Activated CD4-positive, alpha-beta T cell treated with anti-CD3 and anti-CD28 coated beads, Interleukin-2, amount 10 ng/mL, durations not matched to agents 24 days and 14 days (primary cell): ENCODE measurements at regions of chr9 and their contacts with region 1.

Region 1: DNA sequence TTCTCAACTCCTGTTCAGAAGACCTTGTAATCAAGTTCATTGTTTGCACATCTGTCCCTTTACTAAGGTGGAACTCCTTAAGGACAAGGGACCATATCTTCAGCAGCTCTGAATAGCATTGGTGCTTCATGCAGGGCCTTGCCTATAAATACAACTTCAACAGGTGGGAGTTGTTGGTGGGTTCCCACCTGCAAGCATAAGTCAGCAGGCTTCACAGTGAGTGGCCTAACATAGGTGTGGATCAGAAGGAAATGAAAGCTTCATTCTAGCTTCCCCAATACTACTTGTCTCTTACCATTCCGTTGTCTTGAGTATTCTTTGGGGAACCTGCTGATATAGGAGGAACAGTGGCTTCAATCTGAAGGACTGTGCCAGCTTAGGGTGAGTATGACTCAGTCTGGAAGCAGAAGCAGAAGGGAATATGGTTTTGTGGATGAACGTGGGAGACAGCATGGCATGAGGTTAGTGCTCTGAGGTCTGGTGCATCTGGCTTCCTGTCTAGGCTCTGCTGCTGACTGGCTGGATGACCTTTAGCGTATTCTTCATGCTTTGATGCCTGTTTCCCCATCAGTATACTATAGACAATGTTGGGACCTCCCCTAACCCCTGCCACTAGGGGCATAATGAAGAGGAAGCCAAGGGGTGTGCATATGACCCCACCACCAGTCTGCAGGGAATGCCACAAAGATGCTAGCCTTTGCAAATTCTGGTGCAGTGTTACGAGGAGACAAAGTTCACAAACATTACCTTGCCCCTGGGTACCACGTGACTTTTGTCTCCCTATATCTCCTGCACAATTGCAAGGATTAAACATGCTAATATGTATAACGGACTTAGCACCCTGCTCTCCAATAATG is 192.3 kb downstream of the PALM2AKAP2 start:
- DNase-seq: peak; percentile 71
- H3K4me3 Mint-ChIP-seq: peak overlapping the region; percentile 18
- H3K27ac Mint-ChIP-seq: peak overlapping the region; percentile 82
- H3K4me1 Mint-ChIP-seq: peaks cover 88% of the 10 kb centered on the region
- H3K27me3 Mint-ChIP-seq: no peaks in the 10 kb centered on the region

Region 2: GRCh38 chr9:109440797-109441287 is 531.4 kb before region 1 on chr9:
- intact Hi-C with region 1: loop called (anchors 10 kb)
- DNase-seq: peak; percentile 92
- H3K4me3 Mint-ChIP-seq: no peak overlapping the region
- H3K27ac Mint-ChIP-seq: peak overlapping the region; percentile 83
- H3K4me1 Mint-ChIP-seq: peaks cover 18% of the 10 kb centered on the region
- H3K27me3 Mint-ChIP-seq: peaks cover 22% of the 10 kb centered on the region

Region 3: GRCh38 chr9:109894921-109895758 is 77.1 kb before region 1 on chr9:
- intact Hi-C with region 1: loop called (anchors 1 kb)
- DNase-seq: peak; percentile 80
- H3K4me3 Mint-ChIP-seq: peak overlapping the region; percentile 56
- H3K27ac Mint-ChIP-seq: peak overlapping the region; percentile 92
- H3K4me1 Mint-ChIP-seq: peaks cover 53% of the 10 kb centered on the region
- H3K27me3 Mint-ChIP-seq: no peaks in the 10 kb centered on the region

Region 4: DNA sequence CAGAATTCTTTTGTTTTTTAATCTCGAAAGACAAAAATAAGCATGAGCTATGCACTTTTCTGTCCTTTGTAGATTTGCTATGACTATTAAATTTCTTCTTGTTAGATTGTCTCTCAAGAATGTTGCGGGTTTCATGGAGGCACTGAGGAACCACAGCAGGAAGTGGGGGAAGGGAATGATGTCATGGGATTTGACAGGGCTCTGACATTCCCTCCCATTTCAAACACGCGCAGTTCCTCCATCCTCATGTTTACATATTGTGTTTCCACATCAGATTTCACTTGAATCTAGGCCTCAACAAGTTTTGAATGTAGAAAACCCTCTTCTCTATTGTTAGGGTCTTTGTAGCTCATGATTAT is 37.4 kb before region 1 on chr9:
- intact Hi-C with region 1: loop called (anchors 1 kb)
- DNase-seq: peak; percentile 65
- H3K4me3 Mint-ChIP-seq: peak overlapping the region; percentile 17
- H3K27ac Mint-ChIP-seq: peak overlapping the region; percentile 92
- H3K4me1 Mint-ChIP-seq: peaks cover 31% of the 10 kb centered on the region
- H3K27me3 Mint-ChIP-seq: no peaks in the 10 kb centered on the region

Region 5: GRCh38 chr9:110007477-110008270 is 35.4 kb after region 1 on chr9:
- intact Hi-C with region 1: loop called (anchors 2 kb)
- DNase-seq: no peak
- H3K4me3 Mint-ChIP-seq: no peak overlapping the region
- H3K27ac Mint-ChIP-seq: no peak overlapping the region
- H3K4me1 Mint-ChIP-seq: peaks cover 30% of the 10 kb centered on the region
- H3K27me3 Mint-ChIP-seq: peaks cover 6% of the 10 kb centered on the region

Region 6: DNA sequence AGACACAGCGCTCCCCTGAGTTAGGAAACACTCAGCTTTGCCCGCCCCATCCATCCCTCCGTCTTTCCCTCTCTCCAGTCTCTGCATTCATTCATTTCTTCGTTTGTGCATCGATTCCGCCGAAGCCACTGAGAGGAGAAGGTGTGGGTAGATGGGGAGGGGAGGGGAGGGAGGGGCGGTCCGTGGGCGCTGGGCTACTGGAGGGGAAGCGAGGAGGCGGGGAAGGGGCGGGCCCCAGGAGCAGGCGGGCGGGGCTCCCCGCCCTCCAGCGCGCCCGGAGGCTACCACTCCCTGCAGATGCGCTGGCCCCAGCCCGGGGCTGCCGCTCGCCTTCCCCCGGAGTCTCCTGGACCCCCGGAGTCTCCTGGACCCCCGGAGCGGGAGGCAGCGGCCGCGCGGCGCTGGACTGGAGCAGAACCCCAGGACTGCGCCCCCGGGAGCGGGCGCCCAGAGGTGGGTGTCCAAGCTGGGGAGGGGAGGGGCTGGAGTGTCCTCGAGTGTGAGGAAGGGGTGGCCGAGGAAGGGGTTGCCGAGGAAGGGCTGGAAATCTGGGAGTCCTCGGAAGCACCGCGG is 76.2 kb after region 1 on chr9:
- intact Hi-C with region 1: loop called (anchors 1 kb)
- DNase-seq: peak; percentile 95
- H3K4me3 Mint-ChIP-seq: peak overlapping the region; percentile 98
- H3K27ac Mint-ChIP-seq: peak overlapping the region; percentile 93
- H3K4me1 Mint-ChIP-seq: peaks cover 40% of the 10 kb centered on the region
- H3K27me3 Mint-ChIP-seq: peaks cover 8% of the 10 kb centered on the region

Region 7: GRCh38 chr9:110152704-110153374 is 180.6 kb after region 1 on chr9:
- intact Hi-C with region 1: loop called (anchors 1 kb)
- DNase-seq: peak; percentile 84
- H3K4me3 Mint-ChIP-seq: peak overlapping the region; percentile 42
- H3K27ac Mint-ChIP-seq: peak overlapping the region; percentile 74
- H3K4me1 Mint-ChIP-seq: peaks cover 95% of the 10 kb centered on the region
- H3K27me3 Mint-ChIP-seq: no peaks in the 10 kb centered on the region